ENCODE measurements at regions of chr1 and their contacts with region 1.

Region 1: GRCh38 chr1:52365746-52366516 is at the start of gene CC2D1B:
- DNase-seq: peak; percentile 97 to 100 (median 99)
- ATAC-seq: peak; percentile 90
- H3K4me3 ChIP-seq: peak within 1 kb of the TSS; percentile 67
- H3K4me3 Mint-ChIP-seq: peak within 1 kb of the TSS; percentile 85 to 98 (median 94)
- H3K27ac ChIP-seq: peak within 1 kb of the TSS; percentile 95
- H3K27ac Mint-ChIP-seq: peak within 1 kb of the TSS; percentile 89 to 97 (median 94)
- H3K4me1 ChIP-seq: peaks cover 15 to 20% of the 10 kb centered on the region in 2 donors
- H3K4me1 Mint-ChIP-seq: peaks cover 26 to 65% (median 51%) of the 10 kb centered on the region in 7 donors
- H3K27me3 ChIP-seq: no peaks in the 10 kb centered on the region
- H3K27me3 Mint-ChIP-seq: no peaks in the 10 kb centered on the region
- total RNA-seq, gene CC2D1B: 44.5 to 91.2 (median 58.3) TPM

Region 2: DNA sequence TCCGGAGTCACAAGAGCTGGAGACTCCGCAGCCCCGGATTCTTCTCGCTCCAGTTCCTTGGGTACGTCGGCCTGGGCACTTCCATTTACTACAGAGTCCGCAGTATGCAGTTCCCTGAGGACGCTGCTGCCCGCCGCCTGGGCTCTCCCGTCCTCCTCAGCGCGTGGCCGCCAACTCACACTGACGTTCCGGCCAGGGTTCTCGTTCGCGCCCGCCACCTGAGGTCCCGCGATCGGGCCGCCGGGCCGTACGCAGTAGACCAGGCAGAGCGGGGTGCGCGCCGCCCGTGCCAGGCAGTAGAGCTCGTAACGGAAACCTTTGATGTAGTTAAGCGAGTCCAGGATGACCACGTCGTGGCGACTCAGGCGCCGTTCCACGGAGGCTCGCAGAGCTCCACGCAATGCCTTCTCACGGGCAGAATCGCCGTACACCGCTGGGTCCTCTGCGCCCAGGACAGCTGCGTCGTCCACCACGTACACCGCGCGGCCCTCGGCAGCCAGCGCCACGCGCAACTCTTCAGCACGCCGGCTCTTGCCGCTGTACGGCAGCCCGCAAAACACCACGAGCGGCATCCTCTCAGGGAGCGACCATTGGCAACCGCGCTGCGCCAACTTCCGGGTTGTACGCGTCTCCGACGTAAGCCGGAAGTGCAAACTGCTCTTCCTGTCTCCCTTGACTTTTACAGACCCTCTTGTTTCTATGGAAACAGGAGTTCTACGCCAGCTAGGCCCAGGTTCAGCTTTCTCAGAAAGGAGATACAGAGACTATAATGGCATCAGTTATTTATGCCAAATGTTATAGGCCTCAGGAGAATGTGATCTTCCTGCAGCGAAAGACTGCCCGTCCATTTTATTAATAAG is 332.5 kb before region 1 on chr1 and contains the start of gene KTI12:
- CTCF ChIA-PET with region 1: no interaction called
- POLR2A ChIA-PET with region 1: interaction called, 5 read pairs
- intact Hi-C with region 1: loop called in 1 of 2 experiments (anchors 1 kb)
- DNase-seq: peak; percentile 72 to 92 (median 89)
- ATAC-seq: peak; percentile 95
- H3K4me3 ChIP-seq: peak within 1 kb of the TSS; percentile 94
- H3K4me3 Mint-ChIP-seq: peak within 1 kb of the TSS; percentile 91 to 96 (median 93)
- H3K27ac ChIP-seq: peak within 1 kb of the TSS; percentile 73
- H3K27ac Mint-ChIP-seq: peak within 1 kb of the TSS; percentile 92 to 97 (median 96)
- H3K4me1 ChIP-seq: peaks cover 20 to 22% of the 10 kb centered on the region in 2 donors
- H3K4me1 Mint-ChIP-seq: peaks cover 18 to 52% (median 38%) of the 10 kb centered on the region in 7 donors
- H3K27me3 ChIP-seq: no peaks in the 10 kb centered on the region
- H3K27me3 Mint-ChIP-seq: no peaks in the 10 kb centered on the region
- total RNA-seq, gene KTI12: 14.5 to 23.5 (median 16.5) TPM

Region 3: GRCh38 chr1:52321061-52321460 is 44.9 kb before region 1 on chr1:
- CTCF ChIA-PET with region 1: no interaction called
- POLR2A ChIA-PET with region 1: no interaction called
- intact Hi-C with region 1: no loop called
- DNase-seq: no peak
- ATAC-seq: no peak
- H3K4me3 ChIP-seq: no peak overlapping the region
- H3K4me3 Mint-ChIP-seq: no peak overlapping the region
- H3K27ac ChIP-seq: no peak overlapping the region
- H3K27ac Mint-ChIP-seq: no peak overlapping the region
- H3K4me1 ChIP-seq: no peaks in the 10 kb centered on the region
- H3K4me1 Mint-ChIP-seq: no peaks in the 10 kb centered on the region
- H3K27me3 ChIP-seq: no peaks in the 10 kb centered on the region
- H3K27me3 Mint-ChIP-seq: no peaks in the 10 kb centered on the region

Region 4: GRCh38 chr1:52404116-52404986 is 38.4 kb after region 1 on chr1 and contains the starts of genes ORC1 and PRPF38A:
- CTCF ChIA-PET with region 1: interaction called, 4 read pairs
- POLR2A ChIA-PET with region 1: interaction called, 68 read pairs
- intact Hi-C with region 1: loop called (anchors 1 kb)
- DNase-seq: peak; percentile 89 to 97 (median 96)
- ATAC-seq: peak; percentile 99
- H3K4me3 ChIP-seq: peak within 1 kb of the TSS; percentile 83
- H3K4me3 Mint-ChIP-seq: peak within 1 kb of the TSS; percentile 96 to 100 (median 99)
- H3K27ac ChIP-seq: peak within 1 kb of the TSS; percentile 92
- H3K27ac Mint-ChIP-seq: peak within 1 kb of the TSS; percentile 95 to 100 (median 98)
- H3K4me1 ChIP-seq: peaks cover 10 to 16% of the 10 kb centered on the region in 2 donors
- H3K4me1 Mint-ChIP-seq: peaks cover 11 to 66% (median 47%) of the 10 kb centered on the region in 7 donors
- H3K27me3 ChIP-seq: no peaks in the 10 kb centered on the region
- H3K27me3 Mint-ChIP-seq: no peaks in the 10 kb centered on the region
- total RNA-seq, gene ORC1: 0.97 to 25.2 (median 1.3) TPM
- total RNA-seq, gene PRPF38A: 62.1 to 98.7 (median 81.6) TPM

Region 5: DNA sequence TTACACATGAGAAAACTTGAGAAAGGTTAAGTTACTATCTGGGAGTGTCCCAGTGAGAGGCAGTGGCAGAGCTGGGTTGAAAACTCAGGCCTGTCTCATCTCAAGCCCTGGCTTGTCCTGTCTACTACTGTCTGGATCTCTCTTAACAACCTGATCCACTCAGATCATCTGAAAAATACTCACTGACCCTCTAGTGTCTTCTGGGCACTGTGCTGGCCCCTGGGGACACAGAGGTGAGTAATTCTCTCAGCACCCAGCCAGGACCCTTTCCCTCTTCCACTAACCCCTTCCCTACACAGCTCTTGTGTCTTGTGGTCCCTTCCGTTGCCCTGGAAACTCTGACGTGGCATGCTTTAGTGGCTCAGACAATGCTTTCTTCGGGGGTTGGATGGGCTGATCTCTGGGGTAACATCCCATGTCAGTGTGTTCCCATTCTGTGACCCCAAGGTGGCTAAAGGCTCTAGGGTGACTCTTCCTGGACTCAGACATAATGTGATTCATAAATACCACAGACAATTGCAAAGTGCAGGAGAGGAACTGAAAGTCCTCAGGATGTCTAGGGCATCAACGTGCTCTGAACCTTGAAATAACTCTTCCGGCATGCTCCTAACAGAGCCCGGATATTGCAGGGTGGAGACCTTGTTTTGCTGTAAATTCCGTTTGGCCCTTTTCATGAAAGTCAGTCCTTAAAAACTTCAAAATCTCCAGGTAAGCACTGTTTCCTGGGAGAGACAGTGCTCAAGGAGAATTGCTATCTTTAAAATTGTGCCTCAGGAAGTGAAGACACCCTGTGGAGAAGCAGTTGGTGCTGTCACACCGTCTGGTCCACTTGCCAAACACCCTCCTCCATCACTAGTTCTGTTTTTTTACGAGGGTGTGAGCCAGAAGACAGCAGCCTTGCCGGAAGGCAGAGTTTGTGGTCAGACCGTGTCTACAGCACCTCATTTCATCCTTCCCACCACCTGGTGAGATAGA is 271.1 kb after region 1 on chr1:
- CTCF ChIA-PET with region 1: no interaction called
- POLR2A ChIA-PET with region 1: interaction called, 3 read pairs
- intact Hi-C with region 1: loop called (anchors 1 kb)
- DNase-seq: peak; percentile 39 to 88 (median 83)
- ATAC-seq: peak; percentile 79
- H3K4me3 ChIP-seq: peak overlapping the region; percentile 19
- H3K4me3 Mint-ChIP-seq: peak overlapping the region; percentile 78 to 94 (median 86)
- H3K27ac ChIP-seq: peak overlapping the region; percentile 95
- H3K27ac Mint-ChIP-seq: peak overlapping the region; percentile 96 to 100 (median 99)
- H3K4me1 ChIP-seq: peaks cover 63 to 82% of the 10 kb centered on the region in 2 donors
- H3K4me1 Mint-ChIP-seq: peaks cover 52 to 85% (median 79%) of the 10 kb centered on the region in 7 donors
- H3K27me3 ChIP-seq: no peaks in the 10 kb centered on the region
- H3K27me3 Mint-ChIP-seq: peaks cover 0 to 11% (median 0%) of the 10 kb centered on the region in 5 donors

Region 6: DNA sequence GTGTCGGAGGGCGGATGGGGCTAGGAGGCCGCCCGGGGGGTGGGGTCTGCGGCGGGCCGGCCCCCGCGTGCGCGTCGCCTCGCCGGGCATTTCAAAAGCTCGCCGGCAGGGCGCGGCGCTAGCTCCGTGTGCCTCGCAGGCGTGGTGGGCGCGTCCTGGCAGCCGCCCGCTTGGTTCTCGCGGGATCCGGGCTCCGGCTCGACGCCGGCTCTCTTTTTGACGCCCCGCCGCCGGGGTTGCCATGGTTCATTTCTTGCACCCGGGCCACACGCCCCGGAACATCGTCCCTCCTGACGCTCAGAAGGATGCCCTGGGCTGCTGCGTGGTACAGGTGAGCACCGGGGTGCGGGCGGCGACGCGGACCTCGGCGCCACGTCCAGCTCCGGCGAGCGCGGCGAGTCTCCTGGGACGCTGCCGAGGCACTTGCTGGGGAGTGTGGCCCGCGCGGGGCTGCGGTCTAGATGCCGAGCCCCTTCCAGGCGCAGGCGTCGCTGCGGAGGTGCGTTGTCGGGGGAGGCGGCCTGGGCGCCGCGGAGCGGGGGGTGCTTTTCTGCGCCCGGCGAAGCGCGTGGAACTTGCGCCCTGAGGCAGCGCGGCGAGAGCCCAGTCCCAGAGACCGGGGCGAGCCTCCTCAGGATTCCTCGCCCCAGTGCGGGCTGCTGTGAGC is 476.8 kb after region 1 on chr1 and contains the start of gene ZYG11A:
- CTCF ChIA-PET with region 1: no interaction called
- POLR2A ChIA-PET with region 1: no interaction called
- intact Hi-C with region 1: loop called in 1 of 2 experiments (anchors 1 kb)
- DNase-seq: peak; percentile 50 to 78 (median 72)
- ATAC-seq: peak; percentile 97
- H3K4me3 ChIP-seq: peak within 1 kb of the TSS; percentile 23
- H3K4me3 Mint-ChIP-seq: peak within 1 kb of the TSS; percentile 60 to 78 (median 74)
- H3K27ac ChIP-seq: no peak within 1 kb of the TSS
- H3K27ac Mint-ChIP-seq: peak within 1 kb of the TSS in 1 of 9 donors; percentile 46
- H3K4me1 ChIP-seq: peaks cover 0 to 6% of the 10 kb centered on the region in 2 donors
- H3K4me1 Mint-ChIP-seq: peaks cover 0 to 9% (median 6%) of the 10 kb centered on the region in 7 donors
- H3K27me3 ChIP-seq: peaks cover 3 to 7% of the 10 kb centered on the region in 2 donors
- H3K27me3 Mint-ChIP-seq: peaks cover 33 to 38% (median 35%) of the 10 kb centered on the region in 5 donors
- total RNA-seq, gene ZYG11A: 0.07 to 0.27 (median 0.12) TPM in 3 of 5 experiments, not detected in the others

Region 7: GRCh38 chr1:53945433-53946251 is 1579.7 kb after region 1 on chr1 and contains the start of gene IFT25:
- CTCF ChIA-PET with region 1: no interaction called
- POLR2A ChIA-PET with region 1: no interaction called
- intact Hi-C with region 1: loop called in 1 of 2 experiments (anchors 2 kb)
- DNase-seq: peak; percentile 96 to 100 (median 99)
- ATAC-seq: peak; percentile 92
- H3K4me3 ChIP-seq: peak within 1 kb of the TSS; percentile 70
- H3K4me3 Mint-ChIP-seq: peak within 1 kb of the TSS; percentile 91 to 97 (median 96)
- H3K27ac ChIP-seq: peak within 1 kb of the TSS; percentile 83
- H3K27ac Mint-ChIP-seq: peak within 1 kb of the TSS; percentile 83 to 96 (median 93)
- H3K4me1 ChIP-seq: peaks cover 17 to 30% of the 10 kb centered on the region in 2 donors
- H3K4me1 Mint-ChIP-seq: peaks cover 33 to 64% (median 56%) of the 10 kb centered on the region in 7 donors
- H3K27me3 ChIP-seq: no peaks in the 10 kb centered on the region
- H3K27me3 Mint-ChIP-seq: no peaks in the 10 kb centered on the region
- total RNA-seq, gene IFT25: 17.5 to 59.9 (median 41.3) TPM